HepG2 (cell line): ENCODE measurements at regions of chr3 and their contacts with region 1.

Region 1: DNA sequence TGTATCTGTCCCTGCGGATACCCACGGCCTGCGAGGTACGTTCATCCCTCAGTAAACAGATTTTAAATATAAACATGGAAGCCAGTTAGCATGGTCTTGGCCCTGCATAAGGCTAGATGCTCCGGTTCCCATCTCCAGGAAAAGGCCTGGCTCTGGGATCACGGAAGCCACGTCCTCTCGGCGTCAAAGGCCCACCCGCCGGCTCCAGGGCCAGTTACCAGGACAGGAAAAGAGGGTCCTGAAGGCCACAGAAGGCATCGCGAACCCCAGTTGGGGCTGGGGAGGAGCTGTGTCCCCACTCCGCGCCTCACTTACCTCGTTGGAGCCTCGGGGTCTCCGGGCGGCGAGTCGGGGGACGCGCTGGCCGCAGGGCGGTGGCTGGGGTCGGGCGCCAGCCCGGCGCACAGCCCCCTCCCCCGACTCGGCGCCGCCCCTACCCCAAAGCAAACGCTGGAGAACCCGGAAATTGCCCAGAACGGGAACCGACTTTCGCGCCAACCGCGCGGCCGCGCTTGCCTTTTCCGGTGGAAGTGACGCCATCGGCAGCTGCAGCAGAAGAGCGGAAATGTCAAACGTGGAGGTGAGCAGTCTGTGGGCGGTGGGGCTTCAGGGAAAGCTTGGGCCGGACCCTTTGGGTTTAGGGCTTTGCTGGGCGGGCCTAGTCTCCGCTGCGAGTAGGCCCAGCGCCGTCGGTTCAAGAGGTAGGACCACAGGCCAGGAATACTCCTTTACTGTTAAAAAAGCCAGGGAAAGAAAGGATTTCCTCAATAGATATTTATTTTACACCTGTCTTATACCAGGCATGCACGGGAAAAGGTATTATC is at the start of gene TOPBP1:
- DNase-seq: peak; percentile 77
- ATAC-seq: peak; percentile 91
- H3K4me3 ChIP-seq: peak within 1 kb of the TSS; percentile 80 to 91 (median 88)
- H3K27ac ChIP-seq: peak within 1 kb of the TSS; percentile 70
- H3K4me1 ChIP-seq: peaks cover 58% of the 10 kb centered on the region
- H3K27me3 ChIP-seq: no peaks in the 10 kb centered on the region; a peak in 1 of 5 replicates
- CTCF ChIP-seq: no peak
- EP300 ChIP-seq: no peak
- POLR2A ChIP-seq: peak; percentile 44 to 48; a peak in 3 of 4 replicates
- RAD21 ChIP-seq: no peak
- total RNA-seq, gene TOPBP1: 42.9 and 59.3 TPM in 2 replicates

Region 2: DNA sequence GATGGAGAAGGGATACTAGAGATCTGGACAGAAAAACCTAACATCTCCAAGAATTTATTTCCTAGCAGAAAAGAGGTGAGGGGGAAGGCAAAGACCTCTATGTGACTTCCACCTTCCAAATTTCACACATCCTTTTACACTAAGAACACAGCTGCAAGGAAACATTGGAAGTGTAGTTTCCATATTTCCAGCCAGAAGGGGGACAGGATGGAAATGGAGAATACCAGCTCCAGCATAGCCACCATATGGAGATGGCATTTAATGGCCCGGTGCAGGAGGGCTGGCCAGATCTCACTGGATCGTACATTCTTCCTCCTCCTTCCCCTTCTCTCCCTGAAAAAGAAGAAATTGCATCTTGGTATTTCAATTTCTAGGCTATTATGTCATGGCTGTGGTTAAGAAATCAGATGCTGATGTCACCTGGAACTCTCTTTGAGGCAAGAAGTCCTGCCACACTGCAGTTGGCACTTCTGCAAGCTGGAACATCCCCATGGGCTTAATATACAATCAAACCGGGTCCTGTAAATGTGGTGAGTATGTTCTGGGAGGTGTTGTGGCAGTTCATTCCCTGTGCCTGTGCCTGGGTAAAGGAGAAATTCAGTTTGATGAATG is 47.6 kb after region 1 on chr3:
- CTCF ChIA-PET with region 1: no interaction called
- POLR2A ChIA-PET with region 1: interaction called, 6 read pairs
- in situ Hi-C with region 1: no loop called
- intact Hi-C with region 1: loop called (anchors 5 kb)
- DNase-seq: no peak
- ATAC-seq: peak; percentile 73
- H3K4me3 ChIP-seq: no peak overlapping the region
- H3K27ac ChIP-seq: no peak overlapping the region
- H3K4me1 ChIP-seq: peaks cover 37% of the 10 kb centered on the region
- H3K27me3 ChIP-seq: peaks cover 1 to 3% of the 10 kb centered on the region in 2 experiments; a peak in 1 of 5 replicates
- CTCF ChIP-seq: no peak
- EP300 ChIP-seq: no peak
- POLR2A ChIP-seq: no peak
- RAD21 ChIP-seq: 0 out of 2 replicates have a peak, but pooled peaks have one; percentile 36

Region 3: GRCh38 chr3:133805527-133806475 is 144.1 kb after region 1 on chr3 and contains the start of gene SRPRB:
- CTCF ChIA-PET with region 1: no interaction called
- POLR2A ChIA-PET with region 1: no interaction called
- in situ Hi-C with region 1: no loop called
- intact Hi-C with region 1: loop called (anchors 2 kb)
- DNase-seq: peak; percentile 87
- ATAC-seq: peak; percentile 99
- H3K4me3 ChIP-seq: peak within 1 kb of the TSS; percentile 77 to 91 (median 85)
- H3K27ac ChIP-seq: peak within 1 kb of the TSS; percentile 55
- H3K4me1 ChIP-seq: peaks cover 27% of the 10 kb centered on the region
- H3K27me3 ChIP-seq: no peaks in the 10 kb centered on the region; a peak in 1 of 5 replicates
- CTCF ChIP-seq: no peak
- EP300 ChIP-seq: no peak
- POLR2A ChIP-seq: peak; percentile 93 to 94
- RAD21 ChIP-seq: 0 out of 2 replicates have a peak, but pooled peaks have one; percentile 18
- total RNA-seq, gene SRPRB: 60.7 and 111 TPM in 2 replicates

Region 4: GRCh38 chr3:133821767-133822638 is 160.3 kb after region 1 on chr3:
- CTCF ChIA-PET with region 1: interaction called, 10 read pairs
- POLR2A ChIA-PET with region 1: no interaction called
- in situ Hi-C with region 1: loop called (anchors 5 kb)
- intact Hi-C with region 1: loop called (anchors 5 kb)
- DNase-seq: peak; percentile 83
- ATAC-seq: peak; percentile 82
- H3K4me3 ChIP-seq: no peak overlapping the region
- H3K27ac ChIP-seq: no peak overlapping the region
- H3K4me1 ChIP-seq: 0 out of 2 replicates have a peak, but pooled peaks cover 5% of the 10 kb centered on the region
- H3K27me3 ChIP-seq: no peaks in the 10 kb centered on the region
- CTCF ChIP-seq: peak; percentile 69
- EP300 ChIP-seq: no peak
- POLR2A ChIP-seq: peak in 1 of 2 experiments; percentile 29; a peak in 1 of 4 replicates
- RAD21 ChIP-seq: 0 out of 2 replicates have a peak, but pooled peaks have one; percentile 32